Transverse colon (tissue), 4 donors: ENCODE measurements at regions of chr12 and their contacts with region 1.

Region 1: DNA sequence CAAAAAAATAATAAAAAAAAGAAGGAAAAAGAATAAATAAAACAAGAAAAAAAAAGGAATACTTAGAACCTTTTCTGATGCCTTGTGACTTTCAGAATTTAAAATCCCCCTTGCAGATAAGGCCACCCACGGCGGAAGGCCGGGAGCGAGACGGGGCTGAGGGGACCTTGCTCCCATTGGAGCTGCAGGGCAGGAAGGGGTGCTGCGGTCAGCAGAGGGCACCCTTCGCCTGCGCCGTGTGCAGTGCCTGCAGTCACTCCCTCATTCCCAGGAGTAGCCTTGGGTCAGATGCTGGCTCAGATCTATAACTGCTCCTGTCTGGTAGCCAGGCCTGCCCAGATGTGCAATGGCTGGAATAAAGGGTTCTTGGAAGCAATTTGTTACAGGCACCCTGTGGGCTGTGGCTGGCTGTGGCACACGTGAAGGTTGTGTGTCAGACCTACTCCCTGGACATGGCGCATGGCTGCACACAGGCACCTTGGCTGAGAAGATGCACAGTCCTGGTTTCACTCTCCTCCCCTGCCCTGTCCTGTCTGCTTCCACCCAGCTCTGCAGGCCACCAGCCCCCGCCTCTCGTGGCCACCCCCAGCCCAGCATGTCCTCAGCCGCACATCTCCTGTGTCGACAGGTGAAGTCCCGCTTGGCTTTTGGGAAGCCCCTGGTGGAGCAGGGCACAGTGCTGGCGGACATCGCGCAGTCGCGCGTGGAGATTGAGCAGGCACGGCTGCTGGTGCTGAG is 13.4 kb upstream of the ALDH2 start:
- DNase-seq: peak; percentile 75
- H3K4me3 ChIP-seq: no peak overlapping the region
- H3K27ac ChIP-seq: peak overlapping the region in 1 of 4 donors; percentile 6
- H3K4me1 ChIP-seq: peaks cover 0 to 16% (median 7%) of the 10 kb centered on the region in 4 donors
- H3K27me3 ChIP-seq: no peaks in the 10 kb centered on the region
- CTCF ChIP-seq: peak; percentile 69 to 84 (median 80)
- EP300 ChIP-seq: no peak
- POLR2A ChIP-seq: no peak

Region 2: DNA sequence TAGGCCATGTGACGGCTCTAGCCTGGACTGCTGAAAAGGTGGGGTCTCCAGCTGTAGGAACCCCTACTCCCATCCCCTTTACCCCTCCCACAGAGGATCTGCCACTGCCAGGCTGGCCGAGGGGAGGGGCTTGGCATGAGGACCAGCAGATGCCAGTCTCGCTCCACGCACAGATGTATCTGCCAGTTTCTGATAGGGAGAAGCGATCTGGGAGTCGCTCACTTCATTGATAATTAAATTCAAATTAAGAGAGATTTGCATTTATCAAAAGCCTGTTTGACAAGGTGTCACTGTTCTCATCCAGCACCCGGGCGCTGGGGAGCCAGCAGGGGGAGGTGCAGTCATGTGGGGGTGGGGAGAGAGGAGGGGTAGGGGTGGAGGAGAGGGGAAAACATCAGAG is 615.3 kb before region 1 on chr12:
- in situ Hi-C with region 1: no loop called
- intact Hi-C with region 1: no loop called
- DNase-seq: no peak
- H3K4me3 ChIP-seq: no peak overlapping the region
- H3K27ac ChIP-seq: no peak overlapping the region
- H3K4me1 ChIP-seq: peaks cover 0 to 1% (median 0%) of the 10 kb centered on the region in 4 donors
- H3K27me3 ChIP-seq: no peaks in the 10 kb centered on the region
- CTCF ChIP-seq: no peak
- EP300 ChIP-seq: no peak
- POLR2A ChIP-seq: no peak

Region 3: GRCh38 chr12:111807232-111807631 is 53.9 kb after region 1 on chr12:
- in situ Hi-C with region 1: loop called in 3 of 4 experiments (anchors 10 kb)
- intact Hi-C with region 1: loop called (anchors 5 kb)
- DNase-seq: peak; percentile 39
- H3K4me3 ChIP-seq: no peak overlapping the region
- H3K27ac ChIP-seq: peak overlapping the region in 3 of 4 donors; percentile 23 to 59 (median 58)
- H3K4me1 ChIP-seq: peaks cover 0 to 9% (median 0%) of the 10 kb centered on the region in 4 donors
- H3K27me3 ChIP-seq: no peaks in the 10 kb centered on the region
- CTCF ChIP-seq: no peak
- EP300 ChIP-seq: no peak
- POLR2A ChIP-seq: no peak

Region 4: GRCh38 chr12:111812881-111813741 is 59.8 kb after region 1 on chr12:
- in situ Hi-C with region 1: loop called in 3 of 4 experiments (anchors 10 kb)
- intact Hi-C with region 1: loop called (anchors 5 kb)
- DNase-seq: peak; percentile 80
- H3K4me3 ChIP-seq: no peak overlapping the region
- H3K27ac ChIP-seq: peak overlapping the region in 2 of 4 donors; percentile 10 to 28
- H3K4me1 ChIP-seq: peaks cover 0 to 13% (median 6%) of the 10 kb centered on the region in 4 donors
- H3K27me3 ChIP-seq: no peaks in the 10 kb centered on the region
- CTCF ChIP-seq: peak; percentile 69 to 90 (median 78)
- EP300 ChIP-seq: no peak
- POLR2A ChIP-seq: no peak